ENCODE measurements at regions of chr5 and their contacts with region 1.

Region 1: DNA sequence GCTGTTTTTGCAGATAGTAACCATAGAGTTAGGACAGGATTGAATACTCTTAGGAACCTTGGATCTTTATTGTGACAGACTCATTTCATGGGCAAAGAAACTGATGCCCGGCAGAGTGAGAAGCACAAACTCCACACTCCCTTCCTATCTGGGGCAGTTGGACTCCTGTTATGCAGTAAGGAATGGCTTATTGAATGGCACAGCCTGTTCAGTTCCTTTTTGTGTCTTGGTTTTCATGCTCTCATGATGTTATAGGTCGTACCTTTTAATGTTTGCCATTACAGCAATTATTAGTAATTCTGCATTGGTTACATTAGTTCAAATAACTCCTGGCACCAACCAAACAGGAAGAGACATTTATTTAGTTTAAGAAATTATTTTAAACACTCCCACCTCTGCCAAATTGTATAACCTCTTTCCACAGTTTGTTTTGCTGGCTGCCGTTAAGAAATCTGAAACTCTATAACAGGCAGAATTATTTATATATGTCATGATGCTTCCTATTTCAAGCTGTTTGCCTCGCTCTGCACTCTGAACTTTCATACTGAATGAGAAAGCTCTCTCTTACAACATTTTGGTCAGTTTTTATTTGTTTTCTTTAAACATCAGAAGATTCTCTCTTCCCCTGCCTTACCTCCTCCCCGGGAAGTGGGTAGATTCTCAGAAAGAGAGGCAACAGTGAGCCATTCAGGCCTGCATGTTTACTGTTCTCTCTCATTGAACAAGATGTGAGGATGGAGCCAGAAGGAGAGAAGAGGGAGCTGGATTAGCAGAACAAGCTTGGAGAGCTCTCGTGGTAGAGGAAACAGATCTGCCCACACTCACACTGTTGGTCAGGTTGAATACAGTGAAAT is 144.4 kb downstream of the ARHGEF28 start:
- DNase-seq: peak; percentile 63
- ATAC-seq: peak; percentile 91
- H3K4me3 ChIP-seq: peak overlapping the region; percentile 17; the same call in 1 of the 2 replicates
- H3K27ac ChIP-seq: peak overlapping the region; percentile 70
- H3K4me1 ChIP-seq: peaks cover 34% of the 10 kb centered on the region
- H3K27me3 ChIP-seq: no peaks in the 10 kb centered on the region
- CTCF ChIP-seq: no peak

Region 2: DNA sequence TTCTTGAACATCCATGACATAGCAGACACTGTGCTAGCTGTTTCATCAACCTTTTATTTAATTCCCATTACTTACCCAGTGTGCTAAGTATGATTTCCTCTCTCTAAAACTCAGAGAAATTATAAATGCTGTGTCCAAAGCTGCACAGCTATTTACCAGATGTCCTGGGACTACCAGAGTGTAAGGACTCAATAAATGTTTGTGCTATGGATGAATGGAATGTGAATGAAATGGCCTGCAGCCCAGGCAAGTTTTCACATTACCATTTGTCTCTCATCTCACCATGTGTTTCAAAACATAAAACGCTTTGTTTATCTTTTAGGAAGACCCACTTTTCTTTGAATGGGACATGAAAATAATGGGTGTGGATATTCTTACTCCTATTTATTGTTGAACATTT is 48.2 kb before region 1 on chr5:
- CTCF ChIA-PET with region 1: no interaction called
- POLR2A ChIA-PET with region 1: no interaction called
- intact Hi-C with region 1: loop called (anchors 10 kb)
- DNase-seq: no peak
- ATAC-seq: no peak
- H3K4me3 ChIP-seq: no peak overlapping the region
- H3K27ac ChIP-seq: no peak overlapping the region
- H3K4me1 ChIP-seq: no peaks in the 10 kb centered on the region
- H3K27me3 ChIP-seq: no peaks in the 10 kb centered on the region
- CTCF ChIP-seq: no peak

Measured in PC-3 (cell line).